B cell (primary cell): ENCODE measurements at regions of chr13 and their contacts with region 1.

Region 1: DNA sequence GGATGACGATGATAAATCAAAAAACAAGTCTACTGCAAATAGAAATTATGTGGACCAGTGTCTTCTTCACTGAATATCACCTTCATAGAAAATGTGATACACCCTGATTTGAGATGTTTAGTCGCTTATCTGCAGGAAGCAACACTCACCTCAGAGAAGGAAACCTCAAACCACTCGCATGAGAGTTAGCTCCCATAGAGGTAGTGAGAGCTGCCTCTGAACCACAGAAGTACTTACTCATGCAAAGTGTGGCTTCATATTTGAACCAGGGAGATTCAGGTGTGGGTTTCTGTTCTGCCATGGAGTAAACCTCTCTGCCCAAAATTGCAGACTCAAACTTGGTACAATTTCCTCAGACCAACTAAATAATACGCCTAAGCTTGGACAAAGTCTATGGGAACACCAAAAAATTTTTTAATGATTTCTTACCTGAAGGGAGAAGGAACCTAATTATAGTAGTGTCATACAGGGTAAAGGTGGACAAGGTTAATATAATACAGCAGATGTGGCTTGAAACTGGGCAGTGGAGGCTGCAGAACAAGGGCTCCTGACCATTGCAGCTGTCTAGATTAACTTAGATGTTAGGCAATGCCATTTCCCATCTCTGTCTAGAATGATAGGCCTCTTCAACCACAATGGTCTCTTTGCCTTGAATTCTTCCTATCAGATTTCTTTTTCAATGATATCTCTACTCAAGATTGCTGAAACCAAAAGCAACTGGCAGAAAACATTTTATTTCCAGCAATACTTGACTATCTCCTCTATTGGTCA is 29.6 kb upstream of the RCBTB2 start:
- DNase-seq: peak; percentile 86
- ATAC-seq: peak; percentile 99
- H3K4me3 ChIP-seq: no peak overlapping the region
- H3K4me3 Mint-ChIP-seq: no peak overlapping the region
- H3K27ac ChIP-seq: no peak overlapping the region
- H3K27ac Mint-ChIP-seq: no peak overlapping the region
- H3K4me1 ChIP-seq: peaks cover 18 to 45% of the 10 kb centered on the region in 2 donors
- H3K4me1 Mint-ChIP-seq: peaks cover 18% of the 10 kb centered on the region
- H3K27me3 ChIP-seq: peaks cover 2 to 78% (median 66%) of the 10 kb centered on the region in 4 experiments
- H3K27me3 Mint-ChIP-seq: peaks cover 67% of the 10 kb centered on the region
- CTCF ChIP-seq: no peak

Region 2: GRCh38 chr13:48492470-48493065 is 69.9 kb before region 1 on chr13:
- CTCF ChIA-PET with region 1: no interaction called
- POLR2A ChIA-PET with region 1: interaction called, 4 read pairs
- intact Hi-C with region 1: loop called (anchors 1 kb)
- DNase-seq: peak; percentile 91
- ATAC-seq: peak; percentile 86
- H3K4me3 ChIP-seq: peak overlapping the region; percentile 10 to 65 (median 32)
- H3K4me3 Mint-ChIP-seq: no peak overlapping the region
- H3K27ac ChIP-seq: peak overlapping the region; percentile 63 to 66
- H3K27ac Mint-ChIP-seq: no peak overlapping the region
- H3K4me1 ChIP-seq: peaks cover 57% of the 10 kb centered on the region in 2 donors
- H3K4me1 Mint-ChIP-seq: peaks cover 38% of the 10 kb centered on the region
- H3K27me3 ChIP-seq: no peaks in the 10 kb centered on the region
- H3K27me3 Mint-ChIP-seq: no peaks in the 10 kb centered on the region
- CTCF ChIP-seq: no peak

Region 3: DNA sequence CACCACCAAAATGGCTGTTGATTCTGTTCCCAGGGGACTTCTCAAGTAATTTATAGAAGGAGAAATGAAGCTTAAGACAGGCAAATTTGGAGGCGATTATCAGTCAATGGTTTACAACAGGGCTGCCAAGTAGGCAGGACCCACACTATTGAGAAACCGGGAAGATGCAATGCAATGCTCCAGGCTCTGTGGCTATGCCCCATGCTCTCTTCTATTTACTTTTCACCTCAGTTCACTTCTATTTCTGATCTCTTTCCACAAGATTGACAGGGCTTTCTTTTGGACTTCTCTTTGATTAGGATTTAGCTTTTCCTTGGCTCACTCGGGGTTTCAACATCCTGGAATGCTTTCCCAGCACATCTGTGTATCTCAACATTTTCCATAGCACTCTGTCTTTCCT is 16.9 kb before region 1 on chr13:
- CTCF ChIA-PET with region 1: interaction called, 3 read pairs
- POLR2A ChIA-PET with region 1: no interaction called
- intact Hi-C with region 1: loop called (anchors 2 kb)
- DNase-seq: no peak
- ATAC-seq: no peak
- H3K4me3 ChIP-seq: no peak overlapping the region
- H3K4me3 Mint-ChIP-seq: no peak overlapping the region
- H3K27ac ChIP-seq: no peak overlapping the region
- H3K27ac Mint-ChIP-seq: no peak overlapping the region
- H3K4me1 ChIP-seq: peaks cover 0 to 4% of the 10 kb centered on the region in 2 donors
- H3K4me1 Mint-ChIP-seq: no peaks in the 10 kb centered on the region
- H3K27me3 ChIP-seq: peaks cover 0 to 69% (median 62%) of the 10 kb centered on the region in 4 experiments
- H3K27me3 Mint-ChIP-seq: peaks cover 74% of the 10 kb centered on the region
- CTCF ChIP-seq: no peak

Region 4: GRCh38 chr13:48636550-48636949 is 74.1 kb after region 1 on chr13:
- CTCF ChIA-PET with region 1: no interaction called
- POLR2A ChIA-PET with region 1: no interaction called
- intact Hi-C with region 1: no loop called
- DNase-seq: no peak
- ATAC-seq: no peak
- H3K4me3 ChIP-seq: no peak overlapping the region
- H3K4me3 Mint-ChIP-seq: no peak overlapping the region
- H3K27ac ChIP-seq: no peak overlapping the region
- H3K27ac Mint-ChIP-seq: no peak overlapping the region
- H3K4me1 ChIP-seq: no peaks in the 10 kb centered on the region
- H3K4me1 Mint-ChIP-seq: no peaks in the 10 kb centered on the region
- H3K27me3 ChIP-seq: peaks cover 0 to 16% (median 0%) of the 10 kb centered on the region in 4 experiments
- H3K27me3 Mint-ChIP-seq: peaks cover 29% of the 10 kb centered on the region
- CTCF ChIP-seq: no peak

Region 5: GRCh38 chr13:48838193-48839000 is 275.9 kb after region 1 on chr13:
- CTCF ChIA-PET with region 1: no interaction called
- POLR2A ChIA-PET with region 1: no interaction called
- intact Hi-C with region 1: no loop called
- DNase-seq: no peak
- ATAC-seq: no peak
- H3K4me3 ChIP-seq: no peak overlapping the region
- H3K4me3 Mint-ChIP-seq: no peak overlapping the region
- H3K27ac ChIP-seq: no peak overlapping the region
- H3K27ac Mint-ChIP-seq: no peak overlapping the region
- H3K4me1 ChIP-seq: no peaks in the 10 kb centered on the region
- H3K4me1 Mint-ChIP-seq: no peaks in the 10 kb centered on the region
- H3K27me3 ChIP-seq: no peaks in the 10 kb centered on the region
- H3K27me3 Mint-ChIP-seq: peaks cover 14% of the 10 kb centered on the region
- CTCF ChIP-seq: no peak